Naive thymus-derived CD4-positive, alpha-beta T cell (primary cell): ENCODE measurements at regions of chr10 and their contacts with region 1.

Region 1: DNA sequence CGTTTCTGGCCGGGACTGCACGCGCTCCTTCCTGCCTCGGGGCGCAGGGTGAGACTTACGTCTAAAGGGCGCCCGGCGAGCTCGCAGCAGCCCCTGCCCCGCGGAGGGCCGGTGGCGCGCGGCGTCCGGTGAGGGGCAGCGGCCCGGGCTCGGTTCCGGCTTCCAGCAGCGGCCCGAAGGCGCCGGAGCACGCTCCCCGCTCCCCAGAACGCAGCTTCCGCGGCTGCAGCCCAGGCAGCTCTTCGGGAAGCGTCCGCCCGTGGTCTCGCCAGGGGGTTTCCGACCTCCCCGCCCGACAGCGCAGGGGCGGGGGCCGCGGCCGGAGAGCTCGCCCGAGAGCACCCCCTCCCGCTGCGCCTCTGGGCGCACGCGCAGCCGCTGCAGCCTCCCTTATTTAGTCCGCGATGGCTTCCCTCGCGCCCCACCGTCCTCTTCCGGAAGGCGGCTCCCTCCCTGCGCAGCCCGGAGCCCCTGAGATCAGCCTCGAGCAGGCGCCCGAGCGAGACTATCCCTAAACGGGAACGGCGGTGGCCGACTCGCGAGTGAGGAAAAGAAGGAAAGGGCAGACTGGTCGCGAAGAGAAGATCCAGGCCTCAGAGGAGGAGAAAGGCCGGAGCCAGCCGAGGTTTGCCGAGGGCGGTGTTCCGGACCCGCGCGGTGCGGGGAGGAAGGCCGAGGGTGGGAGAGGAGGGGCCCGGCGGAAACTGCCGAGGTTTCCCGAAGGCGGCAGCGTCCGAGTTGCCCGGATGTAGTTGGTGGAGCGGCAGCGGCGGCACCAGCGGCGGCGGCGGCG is at the start of gene WAC:
- DNase-seq: peak; percentile 93 to 99 (median 97)
- ATAC-seq: peak; percentile 89
- H3K4me3 ChIP-seq: peak within 1 kb of the TSS; percentile 94
- H3K4me3 Mint-ChIP-seq: peak within 1 kb of the TSS; percentile 97 to 99 (median 99)
- H3K27ac ChIP-seq: peak within 1 kb of the TSS; percentile 98
- H3K27ac Mint-ChIP-seq: peak within 1 kb of the TSS; percentile 99 to 100 (median 100)
- H3K4me1 ChIP-seq: peaks cover 25 to 34% of the 10 kb centered on the region in 2 donors
- H3K4me1 Mint-ChIP-seq: peaks cover 43 to 78% (median 71%) of the 10 kb centered on the region in 7 donors
- H3K27me3 ChIP-seq: no peaks in the 10 kb centered on the region
- H3K27me3 Mint-ChIP-seq: peaks cover 0 to 2% (median 0%) of the 10 kb centered on the region in 5 donors
- total RNA-seq, gene WAC: 143 to 184 (median 179) TPM

Region 2: GRCh38 chr10:27155066-27155754 is 1377.4 kb before region 1 on chr10 and contains the start of gene MASTL:
- CTCF ChIA-PET with region 1: no interaction called
- POLR2A ChIA-PET with region 1: interaction called, 4 read pairs
- intact Hi-C with region 1: loop called in 1 of 2 experiments (anchors 1 kb)
- DNase-seq: peak; percentile 93 to 97 (median 96)
- ATAC-seq: peak; percentile 89
- H3K4me3 ChIP-seq: peak within 1 kb of the TSS; percentile 90
- H3K4me3 Mint-ChIP-seq: peak within 1 kb of the TSS; percentile 91 to 100 (median 99)
- H3K27ac ChIP-seq: peak within 1 kb of the TSS; percentile 99
- H3K27ac Mint-ChIP-seq: peak within 1 kb of the TSS; percentile 100
- H3K4me1 ChIP-seq: peaks cover 13 to 17% of the 10 kb centered on the region in 2 donors
- H3K4me1 Mint-ChIP-seq: peaks cover 34 to 60% (median 50%) of the 10 kb centered on the region in 7 donors
- H3K27me3 ChIP-seq: no peaks in the 10 kb centered on the region
- H3K27me3 Mint-ChIP-seq: peaks cover 0 to 2% (median 0%) of the 10 kb centered on the region in 5 donors
- total RNA-seq, gene MASTL: 8.4 to 29.0 (median 20.2) TPM

Region 3: GRCh38 chr10:28179006-28179742 is 353.4 kb before region 1 on chr10:
- CTCF ChIA-PET with region 1: no interaction called
- POLR2A ChIA-PET with region 1: no interaction called
- intact Hi-C with region 1: loop called in 1 of 2 experiments (anchors 5 kb)
- DNase-seq: peak in 7 of 9 donors; percentile 18 to 63 (median 49)
- ATAC-seq: peak; percentile 86
- H3K4me3 ChIP-seq: peak overlapping the region; percentile 55
- H3K4me3 Mint-ChIP-seq: peak overlapping the region; percentile 0 to 98 (median 87)
- H3K27ac ChIP-seq: peak overlapping the region; percentile 54
- H3K27ac Mint-ChIP-seq: peak overlapping the region; percentile 77 to 98 (median 92)
- H3K4me1 ChIP-seq: peaks cover 10 to 12% of the 10 kb centered on the region in 2 donors
- H3K4me1 Mint-ChIP-seq: peaks cover 17 to 70% (median 55%) of the 10 kb centered on the region in 7 donors
- H3K27me3 ChIP-seq: no peaks in the 10 kb centered on the region
- H3K27me3 Mint-ChIP-seq: peaks cover 0 to 9% (median 0%) of the 10 kb centered on the region in 5 donors

Region 4: GRCh38 chr10:28367929-28368484 is 164.6 kb before region 1 on chr10:
- CTCF ChIA-PET with region 1: no interaction called
- POLR2A ChIA-PET with region 1: interaction called, 3 read pairs
- intact Hi-C with region 1: loop called (anchors 1 to 5 kb)
- DNase-seq: peak in 8 of 9 donors; percentile 54 to 88 (median 83)
- ATAC-seq: peak; percentile 97
- H3K4me3 ChIP-seq: peak overlapping the region; percentile 18
- H3K4me3 Mint-ChIP-seq: peak overlapping the region; percentile 63 to 93 (median 76)
- H3K27ac ChIP-seq: peak overlapping the region; percentile 78
- H3K27ac Mint-ChIP-seq: peak overlapping the region; percentile 90 to 99 (median 96)
- H3K4me1 ChIP-seq: peaks cover 44 to 54% of the 10 kb centered on the region in 2 donors
- H3K4me1 Mint-ChIP-seq: peaks cover 39 to 80% (median 60%) of the 10 kb centered on the region in 7 donors
- H3K27me3 ChIP-seq: no peaks in the 10 kb centered on the region
- H3K27me3 Mint-ChIP-seq: peaks cover 0 to 5% (median 0%) of the 10 kb centered on the region in 5 donors

Region 5: GRCh38 chr10:28545967-28546644 is 13.5 kb after region 1 on chr10:
- CTCF ChIA-PET with region 1: interaction called, 3 read pairs
- POLR2A ChIA-PET with region 1: interaction called, 7 read pairs
- intact Hi-C with region 1: loop called (anchors 1 kb)
- DNase-seq: peak in 1 of 9 donors; percentile 15
- ATAC-seq: peak; percentile 51
- H3K4me3 ChIP-seq: no peak overlapping the region
- H3K4me3 Mint-ChIP-seq: peak overlapping the region in 8 of 10 donors; percentile 15 to 64 (median 40)
- H3K27ac ChIP-seq: no peak overlapping the region
- H3K27ac Mint-ChIP-seq: peak overlapping the region in 7 of 9 donors; percentile 2 to 40 (median 16)
- H3K4me1 ChIP-seq: peaks cover 46 to 61% of the 10 kb centered on the region in 2 donors
- H3K4me1 Mint-ChIP-seq: peaks cover 62 to 87% (median 79%) of the 10 kb centered on the region in 7 donors
- H3K27me3 ChIP-seq: no peaks in the 10 kb centered on the region
- H3K27me3 Mint-ChIP-seq: no peaks in the 10 kb centered on the region

Region 6: GRCh38 chr10:28975891-28976531 is 443.4 kb after region 1 on chr10:
- CTCF ChIA-PET with region 1: no interaction called
- POLR2A ChIA-PET with region 1: no interaction called
- intact Hi-C with region 1: no loop called
- DNase-seq: no peak
- ATAC-seq: no peak
- H3K4me3 ChIP-seq: no peak overlapping the region
- H3K4me3 Mint-ChIP-seq: no peak overlapping the region
- H3K27ac ChIP-seq: no peak overlapping the region
- H3K27ac Mint-ChIP-seq: no peak overlapping the region
- H3K4me1 ChIP-seq: no peaks in the 10 kb centered on the region
- H3K4me1 Mint-ChIP-seq: no peaks in the 10 kb centered on the region
- H3K27me3 ChIP-seq: no peaks in the 10 kb centered on the region
- H3K27me3 Mint-ChIP-seq: peaks cover 0 to 23% (median 6%) of the 10 kb centered on the region in 5 donors

Region 7: DNA sequence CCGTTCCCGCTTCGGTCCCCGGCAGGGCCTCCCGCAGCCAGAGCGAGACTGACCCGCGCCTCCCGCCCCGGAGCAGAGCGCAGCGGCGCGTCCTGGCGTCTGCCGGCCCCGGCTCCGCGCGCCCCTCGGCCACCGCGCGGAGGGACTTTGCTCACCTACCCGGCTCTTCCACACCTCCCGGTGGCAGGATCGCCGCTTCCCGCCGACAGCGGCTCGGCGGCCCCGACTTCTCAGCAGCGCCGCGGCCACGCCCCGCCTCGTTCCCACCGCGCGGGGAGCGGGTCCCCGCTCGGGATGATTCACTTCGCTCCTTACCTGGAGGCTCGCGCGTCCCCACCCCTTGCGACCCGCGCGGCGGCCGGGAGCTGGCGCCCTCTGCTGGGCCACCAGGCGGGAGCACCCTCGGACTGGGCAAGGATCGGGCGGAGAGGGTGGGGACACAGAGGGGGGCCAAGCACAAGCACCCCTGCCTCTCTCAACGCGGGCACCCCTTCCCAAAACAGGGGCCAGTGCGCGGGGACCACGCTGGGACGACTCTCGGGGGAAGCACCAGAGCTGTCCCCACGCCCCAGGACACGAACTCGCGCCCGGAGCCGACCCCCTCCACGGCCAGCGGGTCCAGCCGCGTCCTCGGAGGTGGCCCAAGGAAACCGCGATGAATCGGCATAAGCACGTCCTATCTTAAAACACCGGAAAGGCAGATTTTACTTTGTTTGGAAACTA is 1203.2 kb after region 1 on chr10:
- CTCF ChIA-PET with region 1: no interaction called
- POLR2A ChIA-PET with region 1: no interaction called
- intact Hi-C with region 1: loop called in 1 of 2 experiments (anchors 2 kb)
- DNase-seq: peak; percentile 58 to 90 (median 74)
- ATAC-seq: peak; percentile 88
- H3K4me3 ChIP-seq: peak overlapping the region; percentile 71
- H3K4me3 Mint-ChIP-seq: peak overlapping the region; percentile 74 to 97 (median 85)
- H3K27ac ChIP-seq: peak overlapping the region; percentile 71
- H3K27ac Mint-ChIP-seq: peak overlapping the region in 5 of 9 donors; percentile 32 to 82 (median 80)
- H3K4me1 ChIP-seq: peaks cover 3 to 23% of the 10 kb centered on the region in 2 donors
- H3K4me1 Mint-ChIP-seq: peaks cover 23 to 50% (median 40%) of the 10 kb centered on the region in 7 donors
- H3K27me3 ChIP-seq: no peaks in the 10 kb centered on the region
- H3K27me3 Mint-ChIP-seq: peaks cover 0 to 44% (median 0%) of the 10 kb centered on the region in 5 donors